ENCODE measurements at regions of chr20 and their contacts with region 1.

Region 1: DNA sequence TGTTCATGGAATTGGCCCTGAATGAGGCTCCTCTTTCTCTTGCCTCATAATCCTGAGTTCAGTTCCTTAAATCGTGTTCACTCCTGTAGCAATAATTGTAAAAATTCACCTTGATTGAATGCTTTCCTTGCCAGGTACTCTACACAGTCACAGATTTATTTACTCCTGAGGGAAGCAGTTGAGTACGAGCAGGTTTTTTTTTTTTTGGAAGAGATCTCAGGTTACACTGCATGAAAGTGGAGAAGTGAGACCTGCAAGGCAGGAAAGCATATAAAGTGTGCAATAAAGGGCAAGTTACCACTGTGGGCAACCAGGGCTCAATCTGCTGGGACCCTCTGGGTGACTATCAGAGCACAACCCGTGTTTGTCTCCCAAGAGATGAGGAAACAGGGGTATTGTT is 93.0 kb upstream of the DOK5 start:
- DNase-seq: no peak
- H3K4me3 Mint-ChIP-seq: no peak overlapping the region
- H3K27ac Mint-ChIP-seq: no peak overlapping the region
- H3K4me1 Mint-ChIP-seq: no peaks in the 10 kb centered on the region
- H3K27me3 Mint-ChIP-seq: peaks cover 59% of the 10 kb centered on the region
- CTCF ChIP-seq: no peak

Region 2: GRCh38 chr20:54219751-54220426 is 162.5 kb before region 1 on chr20:
- CTCF ChIA-PET with region 1: no interaction called
- POLR2A ChIA-PET with region 1: no interaction called
- intact Hi-C with region 1: loop called (anchors 10 kb)
- DNase-seq: peak; percentile 65
- H3K4me3 Mint-ChIP-seq: no peak overlapping the region
- H3K27ac Mint-ChIP-seq: no peak overlapping the region
- H3K4me1 Mint-ChIP-seq: peaks cover 10% of the 10 kb centered on the region
- H3K27me3 Mint-ChIP-seq: no peaks in the 10 kb centered on the region
- CTCF ChIP-seq: peak; percentile 57

Region 3: DNA sequence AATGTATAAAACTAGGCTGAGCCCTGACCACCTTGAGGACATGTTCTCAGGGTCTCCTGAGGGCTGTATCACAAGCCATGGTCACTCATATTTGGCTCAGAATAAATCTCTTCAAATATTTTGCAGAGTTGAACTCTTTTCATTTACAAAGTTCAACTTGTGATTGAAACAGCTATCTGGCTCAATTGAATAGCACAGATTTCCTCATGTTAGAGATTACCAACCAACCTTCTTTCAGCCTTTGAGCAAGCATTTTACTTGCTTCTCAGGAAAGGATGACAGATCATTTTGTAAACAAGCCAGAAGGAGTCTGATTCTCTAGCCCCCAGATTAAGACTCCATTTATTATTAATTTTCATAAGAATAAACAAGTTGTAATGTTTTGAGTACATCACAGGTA is 18.1 kb before region 1 on chr20:
- CTCF ChIA-PET with region 1: no interaction called
- POLR2A ChIA-PET with region 1: no interaction called
- intact Hi-C with region 1: no loop called
- DNase-seq: no peak
- H3K4me3 Mint-ChIP-seq: no peak overlapping the region
- H3K27ac Mint-ChIP-seq: no peak overlapping the region
- H3K4me1 Mint-ChIP-seq: no peaks in the 10 kb centered on the region
- H3K27me3 Mint-ChIP-seq: peaks cover 24% of the 10 kb centered on the region
- CTCF ChIP-seq: no peak

Measured in MCF 10A (cell line).